Cardiac septum (tissue), 1 donor: ENCODE measurements at regions of chr3 and their contacts with region 1.

Region 1: GRCh38 chr3:138774529-138775253 is 60.0 kb downstream of the PIK3CB start:
- DNase-seq: no peak

Region 2: GRCh38 chr3:138681463-138682220 is 93.0 kb before region 1 on chr3:
- intact Hi-C with region 1: no loop called
- DNase-seq: no peak

Region 3: DNA sequence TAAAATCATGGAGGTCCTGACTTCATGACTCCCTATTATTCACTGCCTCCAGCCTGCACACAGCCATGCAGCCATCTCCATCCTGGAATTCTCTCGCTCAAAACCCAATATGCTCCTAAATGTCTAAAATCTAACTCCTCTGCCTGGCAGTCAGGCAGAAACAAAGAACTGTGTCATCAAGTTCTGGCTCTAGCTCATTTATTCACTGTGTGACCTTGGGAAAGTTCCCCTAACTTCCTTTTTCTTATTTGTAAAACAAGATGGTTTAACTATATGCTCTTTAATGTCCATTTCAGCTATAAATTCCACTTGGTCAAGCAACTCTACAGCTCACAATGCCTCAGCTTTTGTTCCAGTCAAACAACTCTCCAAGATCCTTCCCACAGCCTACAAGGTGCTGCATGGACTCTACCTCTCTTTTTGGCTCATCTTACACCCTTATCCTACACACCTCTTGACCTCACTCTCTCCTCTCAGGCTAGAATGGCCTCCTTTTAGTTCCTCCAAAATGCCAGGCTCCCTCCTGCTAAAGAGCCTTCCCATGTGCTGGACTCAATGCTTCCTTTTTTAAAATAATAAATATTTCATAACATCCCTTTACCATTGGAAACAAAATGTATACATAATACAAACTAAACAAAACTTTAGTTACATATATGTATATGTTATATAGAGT is 43.6 kb after region 1 on chr3:
- intact Hi-C with region 1: no loop called
- DNase-seq: no peak

Region 4: GRCh38 chr3:138834359-138835212 is 59.9 kb after region 1 on chr3 and contains the start of gene PIK3CB:
- intact Hi-C with region 1: loop called (anchors 5 kb)
- DNase-seq: peak; percentile 93
- total RNA-seq, gene PIK3CB: 26.1 TPM

Region 5: GRCh38 chr3:138923531-138923994 is 148.9 kb after region 1 on chr3:
- intact Hi-C with region 1: no loop called
- DNase-seq: peak; percentile 86